ENCODE measurements at regions of chr15 and their contacts with region 1.

Region 1: DNA sequence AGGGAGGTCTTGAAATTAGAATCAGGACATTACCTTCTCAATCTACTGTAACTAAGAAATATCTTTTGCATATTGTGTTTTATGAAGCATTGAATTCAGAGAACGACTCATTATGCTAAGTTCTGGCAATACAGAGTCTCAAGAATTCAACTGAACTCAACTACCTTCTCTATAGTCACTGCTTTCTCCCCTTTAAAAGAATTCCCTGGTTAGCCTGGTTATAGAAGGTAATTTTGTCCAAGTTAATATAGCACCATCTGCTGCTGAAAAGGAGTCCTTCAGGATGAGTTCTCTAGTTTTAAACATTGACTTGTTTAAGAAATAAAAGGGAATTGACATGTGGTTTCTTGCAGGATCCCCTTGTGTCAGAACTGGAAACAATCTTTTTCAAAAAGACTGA is 60.2 kb downstream of the IL16 start:
- DNase-seq: no peak
- H3K4me3 Mint-ChIP-seq: no peak overlapping the region
- H3K27ac Mint-ChIP-seq: no peak overlapping the region
- H3K4me1 Mint-ChIP-seq: no peaks in the 10 kb centered on the region
- H3K27me3 Mint-ChIP-seq: peaks cover 75% of the 10 kb centered on the region
- CTCF ChIP-seq: peak; percentile 19

Region 2: GRCh38 chr15:81000624-81001151 is 256.2 kb before region 1 on chr15 and contains the start of gene TLNRD1:
- CTCF ChIA-PET with region 1: no interaction called
- intact Hi-C with region 1: loop called (anchors 5 kb)
- DNase-seq: peak; percentile 96
- H3K4me3 Mint-ChIP-seq: peak within 1 kb of the TSS; percentile 93
- H3K27ac Mint-ChIP-seq: peak within 1 kb of the TSS; percentile 98
- H3K4me1 Mint-ChIP-seq: peaks cover 27% of the 10 kb centered on the region
- H3K27me3 Mint-ChIP-seq: no peaks in the 10 kb centered on the region
- CTCF ChIP-seq: no peak
- total RNA-seq, gene TLNRD1: 31.8 and 33.4 TPM in 2 replicates

Region 3: GRCh38 chr15:81660976-81661375 is 404.1 kb after region 1 on chr15:
- CTCF ChIA-PET with region 1: no interaction called
- intact Hi-C with region 1: no loop called
- DNase-seq: no peak
- H3K4me3 Mint-ChIP-seq: no peak overlapping the region
- H3K27ac Mint-ChIP-seq: no peak overlapping the region
- H3K4me1 Mint-ChIP-seq: no peaks in the 10 kb centered on the region
- H3K27me3 Mint-ChIP-seq: no peaks in the 10 kb centered on the region
- CTCF ChIP-seq: no peak